Activated T-helper 1 cell treated with anti-CD3 and anti-CD28 coated beads, Interleukin-12 subunit alpha, Interleukin-12 subunit beta, Interleukin-2, Interleukin-4 antibody, amounts not matched to agents 30 ng/mL and 10 ng/mL and 1 ng/mL, durations not matched to agents 14 hours and 24 hours and 36 hours (primary cell): ENCODE measurements at regions of chr7 and their contacts with region 1.

Region 1: DNA sequence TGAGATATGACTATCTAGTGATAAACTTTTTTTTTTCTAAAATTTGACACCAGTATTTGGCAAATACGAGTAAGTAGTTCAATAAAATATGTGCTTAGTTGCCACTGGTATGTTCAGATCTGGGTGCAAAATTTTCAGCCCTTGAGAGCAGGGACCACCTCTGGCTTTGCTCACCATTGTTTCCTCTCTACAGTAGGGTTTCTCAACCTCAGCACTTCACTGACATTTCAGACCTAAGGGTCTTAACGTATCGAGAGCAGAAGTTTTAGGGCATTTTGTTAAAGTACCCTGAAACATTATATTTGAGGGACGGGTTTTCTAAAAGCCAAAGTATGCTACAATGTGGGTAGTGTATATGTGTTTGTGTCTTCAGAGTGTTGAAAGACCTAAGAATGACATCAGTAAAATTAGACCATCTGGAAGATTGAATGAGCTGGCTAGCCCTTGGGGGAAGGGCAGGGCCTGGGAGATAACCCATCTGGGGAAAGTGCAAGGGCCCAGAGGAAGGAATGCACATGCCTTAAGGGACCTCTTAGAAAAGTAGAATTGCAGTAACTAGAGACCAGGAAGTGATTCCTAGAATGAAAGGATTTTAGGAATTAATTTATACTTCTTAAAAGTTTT is 11.8 kb downstream of the BZW2 start:
- DNase-seq: no peak
- H3K4me3 Mint-ChIP-seq: no peak overlapping the region
- H3K27ac Mint-ChIP-seq: no peak overlapping the region
- H3K4me1 Mint-ChIP-seq: peaks cover 27% of the 10 kb centered on the region
- H3K27me3 Mint-ChIP-seq: no peaks in the 10 kb centered on the region

Region 2: GRCh38 chr7:16604054-16604453 is 53.7 kb before region 1 on chr7:
- intact Hi-C with region 1: loop called (anchors 10 kb)
- DNase-seq: no peak
- H3K4me3 Mint-ChIP-seq: no peak overlapping the region
- H3K27ac Mint-ChIP-seq: no peak overlapping the region
- H3K4me1 Mint-ChIP-seq: no peaks in the 10 kb centered on the region
- H3K27me3 Mint-ChIP-seq: no peaks in the 10 kb centered on the region